WTC11 (cell line): ENCODE measurements at regions of chr4 and their contacts with region 1.

Region 1: GRCh38 chr4:24686871-24687680 is 102.7 kb upstream of the DHX15 start:
- DNase-seq: peak; percentile 78
- ATAC-seq: peak; percentile 74
- H3K4me3 Mint-ChIP-seq: no peak overlapping the region
- H3K27ac Mint-ChIP-seq: no peak overlapping the region
- H3K4me1 Mint-ChIP-seq: peaks cover 46% of the 10 kb centered on the region
- H3K27me3 Mint-ChIP-seq: peaks cover 2% of the 10 kb centered on the region; the same call in 1 of the 2 replicates
- CTCF ChIP-seq: peak; percentile 93

Region 2: DNA sequence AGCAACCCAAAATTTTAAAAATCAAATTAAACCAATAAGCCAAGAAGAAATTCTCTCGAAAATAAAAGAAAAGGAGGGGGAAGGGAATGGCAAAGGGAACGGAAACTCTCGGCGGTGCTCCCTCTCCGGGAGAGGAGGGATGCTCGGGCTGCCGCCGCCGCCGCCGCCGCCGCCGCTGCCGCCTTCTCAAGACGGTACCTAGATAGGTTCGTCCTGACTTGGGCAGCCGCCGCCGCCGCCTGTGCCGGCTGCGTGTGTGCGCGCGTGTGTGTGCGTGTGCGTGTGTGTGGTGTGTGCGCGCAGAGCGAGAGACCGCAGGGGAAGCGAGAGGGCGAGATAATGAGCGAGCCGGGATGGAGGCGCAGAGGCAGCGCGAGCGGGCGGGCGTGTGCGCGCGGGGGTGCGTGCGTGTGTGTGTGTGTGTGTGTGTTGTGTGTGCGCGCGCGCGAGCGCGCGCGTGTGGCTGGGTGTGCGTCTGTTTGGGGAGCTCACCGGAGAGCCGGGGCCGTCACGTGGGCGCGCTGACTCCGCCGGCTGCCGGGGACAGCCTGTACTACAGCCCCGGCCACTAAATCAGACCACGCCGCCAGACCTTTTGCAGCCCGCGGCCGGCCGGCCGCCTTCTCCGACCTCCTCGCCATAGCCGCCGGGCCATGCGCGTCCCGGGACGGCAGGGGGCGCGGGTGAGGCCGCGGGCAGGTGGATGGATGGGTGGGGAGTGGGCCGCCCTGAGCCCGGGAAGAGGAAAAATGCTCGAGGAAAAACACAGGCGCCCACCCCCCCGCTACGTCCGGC is 214.4 kb before region 1 on chr4:
- CTCF ChIA-PET with region 1: interaction called, 12 read pairs
- POLR2A ChIA-PET with region 1: no interaction called
- DNase-seq: peak; percentile 86
- ATAC-seq: peak; percentile 66
- H3K4me3 Mint-ChIP-seq: peak overlapping the region; percentile 97
- H3K27ac Mint-ChIP-seq: peak overlapping the region; percentile 80
- H3K4me1 Mint-ChIP-seq: peaks cover 67% of the 10 kb centered on the region
- H3K27me3 Mint-ChIP-seq: peaks cover 35% of the 10 kb centered on the region
- CTCF ChIP-seq: peak; percentile 79

Region 3: DNA sequence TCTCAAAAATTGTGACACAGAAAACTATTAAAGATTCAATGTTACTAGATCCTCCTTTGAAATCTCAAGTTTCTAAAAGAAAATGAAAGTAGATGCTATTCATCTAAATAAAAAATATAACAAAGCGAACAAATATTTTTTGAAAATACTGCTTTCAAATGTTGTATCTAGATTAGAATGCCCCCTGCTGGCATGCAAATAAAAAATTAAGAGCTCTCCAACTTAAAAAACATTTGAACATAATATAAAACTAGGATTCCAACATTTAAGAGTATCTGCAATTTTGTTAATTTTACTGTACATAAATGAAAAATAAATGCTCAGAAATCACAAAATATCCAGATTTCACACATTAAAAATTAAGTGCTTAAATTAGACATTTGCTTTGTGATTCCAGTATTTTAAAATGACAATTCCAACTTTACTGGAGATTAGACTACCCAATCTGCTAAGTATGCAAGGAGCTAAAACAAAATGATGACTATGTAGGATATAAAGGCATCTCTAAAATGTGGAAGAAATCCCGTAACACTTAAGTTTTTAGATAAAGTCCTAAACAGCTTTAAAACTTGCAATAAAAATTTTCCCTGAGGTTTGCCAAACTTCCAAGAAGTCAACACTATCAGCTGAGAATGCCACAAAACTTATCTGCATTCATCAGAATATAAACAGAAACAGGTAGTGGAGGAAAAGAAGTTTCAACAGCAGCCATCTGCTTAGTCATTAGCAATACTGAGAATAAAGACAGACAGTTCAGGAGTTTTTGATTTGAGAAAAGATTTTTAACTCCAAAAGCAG is 135.4 kb before region 1 on chr4:
- CTCF ChIA-PET with region 1: interaction called, 11 read pairs
- POLR2A ChIA-PET with region 1: no interaction called
- DNase-seq: no peak
- ATAC-seq: no peak
- H3K4me3 Mint-ChIP-seq: peak overlapping the region; percentile 8; the same call in 1 of the 2 replicates
- H3K27ac Mint-ChIP-seq: peak overlapping the region; percentile 86
- H3K4me1 Mint-ChIP-seq: peaks cover 67% of the 10 kb centered on the region
- H3K27me3 Mint-ChIP-seq: no peaks in the 10 kb centered on the region
- CTCF ChIP-seq: no peak

Region 4: GRCh38 chr4:24573582-24573981 is 113.5 kb before region 1 on chr4:
- CTCF ChIA-PET with region 1: interaction called, 10 read pairs
- POLR2A ChIA-PET with region 1: no interaction called
- DNase-seq: no peak
- ATAC-seq: no peak
- H3K4me3 Mint-ChIP-seq: no peak overlapping the region; the same call in 1 of the 2 replicates
- H3K27ac Mint-ChIP-seq: peak overlapping the region; percentile 85
- H3K4me1 Mint-ChIP-seq: peaks cover 66% of the 10 kb centered on the region
- H3K27me3 Mint-ChIP-seq: no peaks in the 10 kb centered on the region
- CTCF ChIP-seq: no peak

Region 5: GRCh38 chr4:24657768-24658617 is 29.1 kb before region 1 on chr4:
- CTCF ChIA-PET with region 1: interaction called, 18 read pairs
- POLR2A ChIA-PET with region 1: no interaction called
- DNase-seq: no peak
- ATAC-seq: peak; percentile 58
- H3K4me3 Mint-ChIP-seq: no peak overlapping the region
- H3K27ac Mint-ChIP-seq: peak overlapping the region; percentile 97
- H3K4me1 Mint-ChIP-seq: peaks cover 71% of the 10 kb centered on the region
- H3K27me3 Mint-ChIP-seq: no peaks in the 10 kb centered on the region
- CTCF ChIP-seq: no peak

Region 6: GRCh38 chr4:24794916-24795665 is 108.0 kb after region 1 on chr4 and contains the start of gene SOD3:
- CTCF ChIA-PET with region 1: interaction called, 25 read pairs
- POLR2A ChIA-PET with region 1: no interaction called
- DNase-seq: peak; percentile 72
- ATAC-seq: peak; percentile 92
- H3K4me3 Mint-ChIP-seq: peak within 1 kb of the TSS; percentile 70
- H3K27ac Mint-ChIP-seq: peak within 1 kb of the TSS; percentile 54
- H3K4me1 Mint-ChIP-seq: peaks cover 24% of the 10 kb centered on the region
- H3K27me3 Mint-ChIP-seq: peaks cover 59% of the 10 kb centered on the region
- CTCF ChIP-seq: no peak
- total RNA-seq, gene SOD3: 4.1 to 8.2 TPM (median 8.0 TPM) in 3 replicates

Region 7: DNA sequence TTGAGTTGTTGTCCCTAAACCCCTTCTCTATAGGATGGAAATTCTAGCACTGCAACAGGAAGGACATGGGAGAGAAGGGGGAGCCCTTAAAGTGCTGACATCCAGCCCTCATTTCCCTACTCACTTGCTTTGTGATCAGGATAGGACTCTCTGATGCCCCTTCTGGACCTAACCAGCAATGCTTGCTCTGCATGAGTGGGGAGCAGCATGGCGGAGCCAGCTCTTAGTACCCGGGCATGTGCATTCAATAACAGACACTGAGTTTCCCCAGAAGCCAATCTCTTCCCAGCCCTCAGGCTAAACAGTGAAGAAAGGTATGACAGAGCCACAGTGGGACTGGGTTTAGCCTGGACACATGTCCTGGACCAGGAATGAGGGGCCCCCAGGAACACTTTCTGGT is 122.3 kb after region 1 on chr4:
- CTCF ChIA-PET with region 1: no interaction called
- POLR2A ChIA-PET with region 1: no interaction called
- DNase-seq: peak; percentile 45
- ATAC-seq: peak; percentile 96
- H3K4me3 Mint-ChIP-seq: no peak overlapping the region
- H3K27ac Mint-ChIP-seq: no peak overlapping the region
- H3K4me1 Mint-ChIP-seq: peaks cover 32% of the 10 kb centered on the region
- H3K27me3 Mint-ChIP-seq: peaks cover 7% of the 10 kb centered on the region; the same call in 1 of the 2 replicates
- CTCF ChIP-seq: no peak

Region 8: DNA sequence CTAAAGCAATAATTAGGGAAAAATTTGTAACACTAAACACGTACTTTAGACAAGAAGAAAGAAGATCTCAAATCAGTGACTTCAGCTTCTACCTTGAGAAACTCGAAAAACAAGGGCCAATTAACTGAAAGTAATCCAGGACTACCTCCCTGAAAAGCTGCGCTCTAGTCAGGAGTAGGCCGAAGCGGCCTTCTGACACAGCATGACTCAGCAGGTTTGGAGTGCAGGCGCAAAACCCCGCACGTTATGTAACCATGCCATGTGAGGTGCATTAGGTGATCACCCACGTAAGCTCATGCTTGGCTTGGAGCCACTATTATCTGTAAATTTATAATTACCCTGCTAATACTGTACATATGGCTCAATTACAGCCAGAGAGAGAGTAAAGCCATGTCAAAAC is 278.6 kb after region 1 on chr4:
- CTCF ChIA-PET with region 1: no interaction called
- POLR2A ChIA-PET with region 1: no interaction called
- DNase-seq: peak; percentile 26
- ATAC-seq: no peak
- H3K4me3 Mint-ChIP-seq: no peak overlapping the region
- H3K27ac Mint-ChIP-seq: no peak overlapping the region
- H3K4me1 Mint-ChIP-seq: no peaks in the 10 kb centered on the region
- H3K27me3 Mint-ChIP-seq: peaks cover 6% of the 10 kb centered on the region; the same call in 1 of the 2 replicates
- CTCF ChIP-seq: no peak